PC-9 (cell line): ENCODE measurements at regions of chr6 and their contacts with region 1.

Region 1: DNA sequence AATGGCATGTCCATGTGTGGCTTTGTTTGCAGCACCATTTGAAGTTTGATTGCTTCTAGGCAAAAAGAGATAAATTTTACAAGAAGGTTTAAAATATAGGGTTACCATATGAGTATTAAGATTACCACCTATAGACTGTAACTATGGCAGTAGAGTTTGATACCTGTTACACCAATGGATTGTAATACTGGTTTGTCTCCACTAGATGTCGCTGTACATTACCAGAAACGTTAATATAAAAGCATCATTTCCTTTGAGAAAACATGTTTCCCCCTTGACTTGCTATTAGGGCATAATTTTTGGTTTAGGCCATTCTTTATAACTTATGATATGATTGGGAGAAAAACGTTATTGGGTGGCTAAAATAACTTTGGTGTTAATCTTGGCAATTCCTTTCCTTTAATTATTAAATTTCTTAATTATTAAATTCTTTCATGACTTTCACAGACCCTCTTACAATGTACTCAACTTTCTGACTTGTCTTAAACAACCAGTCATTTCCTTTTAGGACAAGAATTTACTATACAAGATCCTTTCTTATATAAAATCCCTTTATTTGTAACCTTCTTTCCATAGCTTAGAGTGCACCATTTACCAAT is 42.8 kb downstream of the HLA-DPB1 start:
- DNase-seq: no peak
- H3K4me3 ChIP-seq: no peak overlapping the region
- H3K27ac ChIP-seq: no peak overlapping the region
- H3K4me1 ChIP-seq: no peaks in the 10 kb centered on the region
- H3K27me3 ChIP-seq: peaks cover 76% of the 10 kb centered on the region
- CTCF ChIP-seq: peak; percentile 93

Region 2: GRCh38 chr6:32853541-32854375 is 264.9 kb before region 1 on chr6 and contains the starts of genes PSMB9 and TAP1:
- CTCF ChIA-PET with region 1: no interaction called
- POLR2A ChIA-PET with region 1: no interaction called
- intact Hi-C with region 1: no loop called
- DNase-seq: peak; percentile 77 to 90
- H3K4me3 ChIP-seq: peak within 1 kb of the TSS; percentile 87
- H3K27ac ChIP-seq: peak within 1 kb of the TSS; percentile 12; the same call in 1 of the 2 replicates
- H3K4me1 ChIP-seq: peaks cover 8% of the 10 kb centered on the region
- H3K27me3 ChIP-seq: no peaks in the 10 kb centered on the region
- CTCF ChIP-seq: peak; percentile 67
- total RNA-seq, gene PSMB9: 37.6 and 48.4 TPM in 2 replicates
- total RNA-seq, gene TAP1: 23.1 and 23.4 TPM in 2 replicates

Region 3: GRCh38 chr6:33049323-33050013 is 69.2 kb before region 1 on chr6:
- CTCF ChIA-PET with region 1: no interaction called
- POLR2A ChIA-PET with region 1: no interaction called
- intact Hi-C with region 1: no loop called
- DNase-seq: no peak
- H3K4me3 ChIP-seq: no peak overlapping the region
- H3K27ac ChIP-seq: no peak overlapping the region
- H3K4me1 ChIP-seq: no peaks in the 10 kb centered on the region
- H3K27me3 ChIP-seq: peaks cover 74% of the 10 kb centered on the region
- CTCF ChIP-seq: peak; percentile 29; the same call in 1 of the 2 replicates

Region 4: DNA sequence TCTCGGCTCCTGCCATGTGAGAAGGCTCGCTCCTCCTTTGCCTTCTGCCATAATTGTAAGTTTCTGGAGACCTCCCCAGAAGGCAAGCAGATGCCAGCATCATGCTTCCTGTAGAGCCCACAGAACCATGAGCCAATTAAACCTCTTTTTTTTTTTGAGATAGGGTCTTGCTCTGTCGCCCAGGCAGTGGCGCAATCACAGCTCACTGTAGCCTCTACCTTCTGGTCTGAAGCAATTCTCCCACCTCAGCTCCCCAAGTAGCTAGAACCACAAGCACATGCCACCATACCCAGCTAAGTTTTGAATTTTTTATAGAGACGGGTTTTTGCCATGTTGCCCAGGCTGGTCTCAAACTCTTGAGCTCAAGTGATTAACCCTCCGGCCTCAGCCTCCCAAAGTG is 118.2 kb after region 1 on chr6:
- CTCF ChIA-PET with region 1: no interaction called
- POLR2A ChIA-PET with region 1: interaction called, 16 read pairs
- intact Hi-C with region 1: no loop called
- DNase-seq: no peak
- H3K4me3 ChIP-seq: no peak overlapping the region
- H3K27ac ChIP-seq: no peak overlapping the region
- H3K4me1 ChIP-seq: no peaks in the 10 kb centered on the region
- H3K27me3 ChIP-seq: peaks cover 91% of the 10 kb centered on the region
- CTCF ChIP-seq: no peak